Naive thymus-derived CD4-positive, alpha-beta T cell (primary cell): ENCODE measurements at regions of chr19 and their contacts with region 1.

Region 1: GRCh38 chr19:15332311-15332996 is at the start of gene BRD4:
- DNase-seq: peak; percentile 67 to 90 (median 81)
- ATAC-seq: peak; percentile 82
- H3K4me3 ChIP-seq: peak within 1 kb of the TSS; percentile 91
- H3K4me3 Mint-ChIP-seq: peak within 1 kb of the TSS; percentile 93 to 99 (median 96)
- H3K27ac ChIP-seq: peak within 1 kb of the TSS; percentile 91
- H3K27ac Mint-ChIP-seq: peak within 1 kb of the TSS; percentile 85 to 96 (median 94)
- H3K4me1 ChIP-seq: peaks cover 28 to 29% of the 10 kb centered on the region in 2 donors
- H3K4me1 Mint-ChIP-seq: peaks cover 32 to 52% (median 47%) of the 10 kb centered on the region in 7 donors
- H3K27me3 ChIP-seq: no peaks in the 10 kb centered on the region
- H3K27me3 Mint-ChIP-seq: no peaks in the 10 kb centered on the region
- total RNA-seq, gene BRD4: 104 to 168 (median 128) TPM

Region 2: DNA sequence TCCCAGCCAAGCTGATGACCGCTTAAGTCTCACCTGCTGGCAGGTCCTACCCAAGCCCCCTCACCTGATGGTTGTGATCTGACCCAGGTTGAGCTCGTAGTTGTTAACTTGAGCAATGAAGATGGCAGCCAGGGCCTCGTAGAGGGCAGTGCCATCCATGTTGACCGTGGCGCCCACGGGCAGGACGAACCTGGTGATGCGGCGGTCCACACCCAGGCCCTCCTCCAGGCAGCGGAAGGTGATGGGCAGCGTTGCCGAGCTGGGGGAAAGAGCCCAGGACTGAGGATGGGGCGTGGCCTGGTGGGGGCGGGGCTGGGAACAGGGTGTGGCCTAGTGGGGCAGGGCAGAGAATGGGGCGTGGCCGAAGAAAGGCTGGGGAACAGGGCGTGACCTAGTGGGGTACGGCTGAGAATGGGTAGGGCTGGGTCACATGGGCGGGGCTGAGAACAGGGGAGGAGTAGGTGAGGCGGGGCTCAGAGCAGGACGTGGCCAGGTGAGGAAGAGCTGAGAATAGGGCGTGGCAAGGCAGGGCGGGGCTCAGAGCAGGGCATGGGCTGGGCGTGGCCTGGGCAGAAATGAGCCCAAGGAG is 378.3 kb before region 1 on chr19:
- CTCF ChIA-PET with region 1: no interaction called
- POLR2A ChIA-PET with region 1: no interaction called
- intact Hi-C with region 1: no loop called
- DNase-seq: no peak
- ATAC-seq: no peak
- H3K4me3 ChIP-seq: no peak overlapping the region
- H3K4me3 Mint-ChIP-seq: no peak overlapping the region
- H3K27ac ChIP-seq: no peak overlapping the region
- H3K27ac Mint-ChIP-seq: no peak overlapping the region
- H3K4me1 ChIP-seq: no peaks in the 10 kb centered on the region
- H3K4me1 Mint-ChIP-seq: peaks cover 0 to 2% (median 0%) of the 10 kb centered on the region in 7 donors
- H3K27me3 ChIP-seq: no peaks in the 10 kb centered on the region
- H3K27me3 Mint-ChIP-seq: peaks cover 0 to 32% (median 18%) of the 10 kb centered on the region in 5 donors

Region 3: DNA sequence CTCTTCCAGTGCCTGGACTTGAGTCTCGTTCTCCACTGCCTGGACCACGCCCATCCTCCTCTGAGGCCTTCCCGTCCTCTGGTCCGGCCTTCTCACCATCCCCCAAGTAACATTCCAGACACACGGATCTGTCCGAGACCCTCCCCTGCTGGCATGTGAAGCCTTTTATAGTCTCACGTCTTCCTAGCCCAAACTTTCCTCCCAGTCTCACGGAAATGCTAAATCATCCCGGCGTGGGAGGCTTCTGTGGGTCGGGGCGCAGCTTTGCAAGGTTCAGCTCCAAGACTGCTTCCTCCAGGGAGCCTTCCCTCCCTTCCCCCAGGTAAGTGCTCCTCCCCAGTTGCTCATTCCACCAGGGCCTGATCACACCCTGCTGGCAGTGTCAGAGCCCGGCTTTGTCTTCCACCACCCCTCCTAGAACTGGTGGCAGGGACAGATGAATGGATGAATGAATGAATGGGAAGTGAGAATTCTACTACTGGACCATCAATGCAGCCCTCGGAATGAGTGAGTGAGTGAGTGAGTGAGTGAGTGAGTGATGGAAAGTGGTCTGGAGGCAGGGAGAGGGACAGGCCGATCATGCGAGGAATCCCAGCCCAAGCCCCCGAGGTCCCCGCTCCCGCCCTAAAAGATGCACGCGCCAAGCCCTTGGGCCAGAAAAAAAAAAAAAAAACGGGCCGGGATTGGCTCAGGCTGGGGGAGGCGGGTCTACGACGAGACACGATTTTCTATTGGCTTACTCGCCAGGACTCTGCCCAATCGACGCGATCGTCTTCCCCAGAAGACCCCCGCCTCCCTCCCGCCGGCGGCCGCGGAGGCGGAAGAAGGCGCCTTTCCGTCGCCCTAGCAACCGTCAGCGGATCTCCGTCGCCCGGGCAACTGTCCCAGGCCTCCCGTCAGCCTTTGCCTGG is 109.5 kb before region 1 on chr19:
- CTCF ChIA-PET with region 1: no interaction called
- POLR2A ChIA-PET with region 1: no interaction called
- intact Hi-C with region 1: loop called in 1 of 2 experiments (anchors 1 kb)
- DNase-seq: peak; percentile 53 to 80 (median 66)
- ATAC-seq: peak; percentile 98
- H3K4me3 ChIP-seq: peak overlapping the region; percentile 48
- H3K4me3 Mint-ChIP-seq: peak overlapping the region; percentile 67 to 84 (median 81)
- H3K27ac ChIP-seq: peak overlapping the region; percentile 8
- H3K27ac Mint-ChIP-seq: peak overlapping the region in 6 of 9 donors; percentile 13 to 67 (median 24)
- H3K4me1 ChIP-seq: peaks cover 0 to 14% of the 10 kb centered on the region in 2 donors
- H3K4me1 Mint-ChIP-seq: peaks cover 10 to 22% (median 15%) of the 10 kb centered on the region in 7 donors
- H3K27me3 ChIP-seq: peaks cover 3 to 11% of the 10 kb centered on the region in 2 donors
- H3K27me3 Mint-ChIP-seq: peaks cover 12 to 37% (median 24%) of the 10 kb centered on the region in 5 donors

Region 4: GRCh38 chr19:15264061-15264932 is 68.2 kb before region 1 on chr19:
- CTCF ChIA-PET with region 1: interaction called, 3 read pairs
- POLR2A ChIA-PET with region 1: no interaction called
- intact Hi-C with region 1: loop called (anchors 2 to 5 kb)
- DNase-seq: peak; percentile 54 to 77 (median 65)
- ATAC-seq: peak; percentile 79
- H3K4me3 ChIP-seq: no peak overlapping the region
- H3K4me3 Mint-ChIP-seq: no peak overlapping the region
- H3K27ac ChIP-seq: no peak overlapping the region
- H3K27ac Mint-ChIP-seq: peak overlapping the region in 2 of 9 donors; percentile 14 to 38
- H3K4me1 ChIP-seq: no peaks in the 10 kb centered on the region
- H3K4me1 Mint-ChIP-seq: peaks cover 7 to 19% (median 11%) of the 10 kb centered on the region in 7 donors
- H3K27me3 ChIP-seq: no peaks in the 10 kb centered on the region
- H3K27me3 Mint-ChIP-seq: no peaks in the 10 kb centered on the region

Region 5: GRCh38 chr19:15297416-15298224 is 34.8 kb before region 1 on chr19:
- CTCF ChIA-PET with region 1: interaction called, 3 read pairs
- POLR2A ChIA-PET with region 1: interaction called, 4 read pairs
- intact Hi-C with region 1: loop called (anchors 2 to 5 kb)
- DNase-seq: peak in 7 of 9 donors; percentile 40 to 54 (median 46)
- ATAC-seq: peak; percentile 63
- H3K4me3 ChIP-seq: peak overlapping the region; percentile 2
- H3K4me3 Mint-ChIP-seq: peak overlapping the region; percentile 69 to 79 (median 74)
- H3K27ac ChIP-seq: peak overlapping the region; percentile 46
- H3K27ac Mint-ChIP-seq: peak overlapping the region; percentile 15 to 91 (median 68)
- H3K4me1 ChIP-seq: peaks cover 71 to 86% of the 10 kb centered on the region in 2 donors
- H3K4me1 Mint-ChIP-seq: peaks cover 57 to 95% (median 93%) of the 10 kb centered on the region in 7 donors
- H3K27me3 ChIP-seq: no peaks in the 10 kb centered on the region
- H3K27me3 Mint-ChIP-seq: no peaks in the 10 kb centered on the region

Region 6: DNA sequence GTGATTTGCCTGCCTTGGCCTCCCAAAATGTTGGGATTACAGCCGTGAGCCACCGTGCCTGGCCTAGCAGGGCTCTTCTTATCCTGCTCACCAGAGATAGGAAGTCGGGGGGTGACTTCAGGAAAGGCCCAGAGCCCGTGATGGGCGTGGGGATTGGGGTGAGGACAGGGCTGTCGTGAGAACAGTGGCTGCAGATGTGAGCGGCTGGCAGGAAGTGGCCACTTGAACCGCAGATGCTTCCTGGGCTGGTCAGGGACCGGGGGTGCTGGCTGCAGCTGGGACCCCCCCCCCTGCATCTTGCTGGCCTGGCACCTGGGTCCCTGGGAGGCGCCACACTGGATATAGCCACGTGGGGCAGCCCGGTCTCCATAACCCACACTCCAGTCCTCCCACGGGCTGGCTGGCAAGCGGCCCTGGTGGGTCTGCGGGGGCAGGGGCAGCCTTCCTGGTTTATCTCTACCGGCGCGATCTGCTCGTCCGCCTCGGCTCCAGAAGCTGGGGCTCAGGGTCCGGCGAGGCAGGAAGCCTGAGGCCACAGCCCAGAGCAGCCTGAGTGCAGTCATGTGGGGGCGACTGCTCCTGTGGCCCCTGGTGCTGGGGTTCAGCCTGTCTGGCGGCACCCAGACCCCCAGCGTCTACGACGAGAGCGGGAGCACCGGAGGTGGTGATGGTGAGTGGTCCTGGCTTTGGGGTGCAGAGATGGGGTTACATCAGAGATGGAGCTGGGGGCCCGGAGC is 1556.3 kb after region 1 on chr19 and contains the start of gene F2RL3:
- CTCF ChIA-PET with region 1: no interaction called
- POLR2A ChIA-PET with region 1: no interaction called
- intact Hi-C with region 1: no loop called
- DNase-seq: no peak
- ATAC-seq: peak; percentile 33
- H3K4me3 ChIP-seq: no peak within 1 kb of the TSS
- H3K4me3 Mint-ChIP-seq: peak within 1 kb of the TSS in 2 of 10 donors; percentile 42 to 56
- H3K27ac ChIP-seq: no peak within 1 kb of the TSS
- H3K27ac Mint-ChIP-seq: peak within 1 kb of the TSS in 1 of 9 donors; percentile 73
- H3K4me1 ChIP-seq: no peaks in the 10 kb centered on the region
- H3K4me1 Mint-ChIP-seq: peaks cover 0 to 22% (median 5%) of the 10 kb centered on the region in 7 donors
- H3K27me3 ChIP-seq: no peaks in the 10 kb centered on the region
- H3K27me3 Mint-ChIP-seq: peaks cover 0 to 27% (median 17%) of the 10 kb centered on the region in 5 donors
- total RNA-seq, gene F2RL3: 0.16 to 0.19 TPM in 2 of 5 experiments, not detected in the others